Activated CD8-positive, alpha-beta T cell treated with anti-CD3 and anti-CD28 coated beads for 36 hours (primary cell): ENCODE measurements at regions of chr13 and their contacts with region 1.

Region 1: GRCh38 chr13:46553886-46554858 is 1.2 kb downstream of the LRCH1 start:
- DNase-seq: peak; percentile 82
- ATAC-seq: peak; percentile 57
- H3K4me3 Mint-ChIP-seq: peak overlapping the region; percentile 90
- H3K27ac Mint-ChIP-seq: peak overlapping the region; percentile 91
- H3K4me1 Mint-ChIP-seq: peaks cover 48% of the 10 kb centered on the region
- H3K27me3 Mint-ChIP-seq: peaks cover 2% of the 10 kb centered on the region
- CTCF ChIP-seq: no peak

Region 2: GRCh38 chr13:46387064-46387851 is 166.9 kb before region 1 on chr13 and contains the start of gene RUBCNL:
- CTCF ChIA-PET with region 1: no interaction called
- POLR2A ChIA-PET with region 1: no interaction called
- intact Hi-C with region 1: no loop called
- DNase-seq: peak; percentile 59
- ATAC-seq: peak; percentile 78
- H3K4me3 Mint-ChIP-seq: peak within 1 kb of the TSS; percentile 75
- H3K27ac Mint-ChIP-seq: peak within 1 kb of the TSS; percentile 18
- H3K4me1 Mint-ChIP-seq: peaks cover 21% of the 10 kb centered on the region
- H3K27me3 Mint-ChIP-seq: peaks cover 35% of the 10 kb centered on the region
- CTCF ChIP-seq: no peak
- total RNA-seq, gene RUBCNL: 0.36 to 0.74 TPM

Region 3: GRCh38 chr13:46565808-46566750 is 11.9 kb after region 1 on chr13:
- CTCF ChIA-PET with region 1: interaction called, 16 read pairs
- POLR2A ChIA-PET with region 1: interaction called, 4 read pairs
- intact Hi-C with region 1: no loop called
- DNase-seq: no peak
- ATAC-seq: no peak
- H3K4me3 Mint-ChIP-seq: no peak overlapping the region
- H3K27ac Mint-ChIP-seq: no peak overlapping the region
- H3K4me1 Mint-ChIP-seq: peaks cover 27% of the 10 kb centered on the region
- H3K27me3 Mint-ChIP-seq: no peaks in the 10 kb centered on the region
- CTCF ChIP-seq: no peak

Region 4: GRCh38 chr13:46595136-46595886 is 41.1 kb after region 1 on chr13:
- CTCF ChIA-PET with region 1: interaction called, 37 read pairs
- POLR2A ChIA-PET with region 1: interaction called, 3 read pairs
- intact Hi-C with region 1: loop called (anchors 5 kb)
- DNase-seq: no peak
- ATAC-seq: no peak
- H3K4me3 Mint-ChIP-seq: no peak overlapping the region
- H3K27ac Mint-ChIP-seq: no peak overlapping the region
- H3K4me1 Mint-ChIP-seq: peaks cover 85% of the 10 kb centered on the region
- H3K27me3 Mint-ChIP-seq: no peaks in the 10 kb centered on the region
- CTCF ChIP-seq: no peak

Region 5: DNA sequence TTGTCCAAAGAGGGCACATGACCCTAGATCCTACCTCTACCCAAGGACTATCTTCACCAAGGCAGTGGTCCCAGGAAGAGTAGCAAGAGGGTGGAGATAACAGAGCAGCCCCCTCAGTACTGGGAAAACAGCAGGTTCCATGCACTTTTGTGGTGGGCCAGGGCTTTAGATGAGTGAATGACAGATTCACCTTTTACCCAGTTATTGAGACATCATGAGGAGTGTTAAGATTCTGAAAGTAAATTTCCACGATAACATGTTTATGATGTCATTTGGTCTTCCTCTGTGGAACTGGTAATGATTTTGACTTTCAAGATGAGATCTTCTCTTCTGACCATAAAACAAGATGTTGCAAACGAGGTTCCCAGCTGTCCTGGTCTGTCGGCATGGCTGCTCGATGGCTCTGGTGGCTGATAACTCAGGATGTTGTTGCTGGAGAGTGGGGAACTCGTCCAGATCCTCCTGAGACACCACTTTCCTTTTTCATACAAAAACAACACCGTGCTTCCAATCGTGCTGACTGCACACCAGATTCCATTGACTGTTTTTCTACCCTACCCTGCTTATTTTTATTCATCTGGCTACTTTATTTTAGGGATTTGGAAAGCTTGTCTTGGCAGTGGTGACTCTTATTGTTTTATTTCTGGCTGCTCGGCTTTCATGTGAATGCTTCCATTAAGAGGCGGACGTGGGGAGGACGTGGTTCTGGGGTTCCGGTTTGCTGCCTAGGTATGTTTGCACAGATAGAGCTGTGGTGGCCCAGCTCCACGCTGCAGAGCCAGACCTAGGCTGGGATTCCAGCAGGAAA is 87.3 kb after region 1 on chr13:
- CTCF ChIA-PET with region 1: interaction called, 12 read pairs
- POLR2A ChIA-PET with region 1: no interaction called
- intact Hi-C with region 1: no loop called
- DNase-seq: no peak
- ATAC-seq: no peak
- H3K4me3 Mint-ChIP-seq: no peak overlapping the region
- H3K27ac Mint-ChIP-seq: no peak overlapping the region
- H3K4me1 Mint-ChIP-seq: peaks cover 43% of the 10 kb centered on the region
- H3K27me3 Mint-ChIP-seq: no peaks in the 10 kb centered on the region
- CTCF ChIP-seq: no peak

Region 6: DNA sequence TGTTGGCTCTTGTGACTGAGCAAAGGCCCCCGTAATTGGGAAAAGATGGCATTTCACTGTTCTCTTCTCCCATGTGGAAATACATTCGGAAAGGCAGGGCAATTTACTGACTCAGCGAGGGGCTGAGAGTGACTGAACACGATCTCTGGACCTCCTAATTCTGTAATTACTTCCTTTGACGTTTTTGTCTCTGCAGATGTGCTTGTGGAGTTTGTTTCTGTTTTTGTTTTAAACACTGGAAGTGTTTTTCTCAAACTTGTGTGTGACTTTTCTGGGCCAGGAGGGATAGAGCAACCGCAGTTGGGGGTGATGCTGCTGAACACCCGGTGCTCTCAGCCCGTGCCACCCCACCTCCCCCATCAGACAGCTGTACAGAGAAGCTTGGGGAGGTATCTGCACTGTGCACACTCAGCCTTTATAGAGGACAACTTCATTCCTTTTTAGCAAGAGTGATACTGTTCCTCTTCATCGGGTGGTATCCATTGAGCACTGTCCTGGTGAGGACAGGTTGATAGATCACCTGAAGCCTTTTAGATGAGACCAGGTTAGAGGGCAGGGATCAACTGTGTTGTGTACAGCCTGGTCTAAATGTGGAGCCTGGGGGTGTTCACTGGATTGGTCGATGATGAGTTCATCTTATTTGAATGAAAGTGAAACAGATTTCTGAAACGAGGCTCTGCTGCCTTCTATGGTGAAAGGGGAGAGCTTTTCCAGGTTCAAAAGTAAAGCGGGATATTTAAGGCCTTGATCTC is 125.4 kb after region 1 on chr13:
- CTCF ChIA-PET with region 1: interaction called, 29 read pairs
- POLR2A ChIA-PET with region 1: no interaction called
- intact Hi-C with region 1: no loop called
- DNase-seq: peak; percentile 61
- ATAC-seq: peak; percentile 91
- H3K4me3 Mint-ChIP-seq: no peak overlapping the region
- H3K27ac Mint-ChIP-seq: no peak overlapping the region
- H3K4me1 Mint-ChIP-seq: peaks cover 21% of the 10 kb centered on the region
- H3K27me3 Mint-ChIP-seq: no peaks in the 10 kb centered on the region
- CTCF ChIP-seq: no peak

Region 7: DNA sequence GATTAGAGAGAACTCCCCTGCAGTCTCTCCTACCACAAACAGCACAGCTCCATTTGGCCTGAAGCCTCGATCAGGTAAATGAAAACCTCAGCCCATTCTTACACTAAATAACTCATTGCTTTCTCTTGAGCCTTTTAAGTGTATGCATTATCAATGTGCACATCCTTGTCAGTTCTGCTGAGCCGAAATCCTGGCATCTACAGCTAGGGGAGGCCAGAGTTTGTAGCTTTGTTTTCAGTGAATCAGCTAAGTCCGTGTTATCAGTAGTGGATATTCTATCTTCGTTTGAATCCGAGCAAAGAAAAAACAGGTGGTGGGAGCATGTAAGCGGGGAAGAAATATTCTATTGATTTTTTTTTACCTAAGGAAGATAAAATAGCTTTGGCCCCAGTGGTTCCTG is 158.4 kb after region 1 on chr13:
- CTCF ChIA-PET with region 1: interaction called, 149 read pairs
- POLR2A ChIA-PET with region 1: no interaction called
- intact Hi-C with region 1: no loop called
- DNase-seq: no peak
- ATAC-seq: no peak
- H3K4me3 Mint-ChIP-seq: no peak overlapping the region
- H3K27ac Mint-ChIP-seq: no peak overlapping the region
- H3K4me1 Mint-ChIP-seq: no peaks in the 10 kb centered on the region
- H3K27me3 Mint-ChIP-seq: no peaks in the 10 kb centered on the region
- CTCF ChIP-seq: no peak

Region 8: GRCh38 chr13:46796515-46797474 is 242.6 kb after region 1 on chr13 and contains the start of gene ESD:
- CTCF ChIA-PET with region 1: interaction called, 8 read pairs
- POLR2A ChIA-PET with region 1: no interaction called
- intact Hi-C with region 1: loop called (anchors 5 kb)
- DNase-seq: peak; percentile 98
- ATAC-seq: peak; percentile 96
- H3K4me3 Mint-ChIP-seq: peak within 1 kb of the TSS; percentile 96
- H3K27ac Mint-ChIP-seq: peak within 1 kb of the TSS; percentile 93
- H3K4me1 Mint-ChIP-seq: peaks cover 36% of the 10 kb centered on the region
- H3K27me3 Mint-ChIP-seq: no peaks in the 10 kb centered on the region
- CTCF ChIP-seq: no peak
- total RNA-seq, gene ESD: 130 to 133 TPM